HepG2 (cell line): ENCODE measurements at regions of chr12 and their contacts with region 1.

Region 1: GRCh38 chr12:110111476-110112334 is 12.5 kb upstream of the IFT81 start:
- DNase-seq: peak; percentile 99
- ATAC-seq: peak; percentile 90
- H3K4me3 ChIP-seq: peak overlapping the region in 1 of 3 experiments; percentile 25; a peak in 1 of 6 replicates
- H3K27ac ChIP-seq: peak overlapping the region; percentile 99
- H3K4me1 ChIP-seq: peaks cover 98% of the 10 kb centered on the region
- H3K27me3 ChIP-seq: no peaks in the 10 kb centered on the region
- CTCF ChIP-seq: no peak
- EP300 ChIP-seq: peak; percentile 72 to 88; a peak in 2 of 4 replicates
- POLR2A ChIP-seq: peak in 1 of 2 experiments; percentile 38; a peak in 1 of 4 replicates
- RAD21 ChIP-seq: no peak; the same call in 1 of the 2 replicates

Region 2: DNA sequence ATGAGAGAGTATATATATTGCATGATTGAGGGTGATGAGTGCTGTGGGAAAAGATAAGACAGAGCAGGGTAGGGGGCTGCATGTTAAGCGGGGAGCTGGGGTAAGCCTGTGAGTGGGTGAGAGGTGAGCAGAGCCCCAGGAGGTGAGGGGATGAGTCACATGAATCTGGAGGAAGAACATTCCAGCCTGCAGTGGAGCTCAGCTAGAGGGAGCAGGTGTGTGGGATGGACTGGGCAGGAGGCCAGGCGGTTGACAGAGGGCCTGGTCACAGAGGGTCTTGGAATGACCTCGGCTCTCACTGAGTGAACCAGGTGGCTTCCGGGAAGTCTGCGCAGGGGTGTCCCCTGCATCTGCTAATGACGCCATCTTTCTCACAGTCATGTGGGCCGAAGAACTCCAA is 160.0 kb before region 1 on chr12:
- CTCF ChIA-PET with region 1: no interaction called
- POLR2A ChIA-PET with region 1: no interaction called
- in situ Hi-C with region 1: no loop called
- intact Hi-C with region 1: no loop called
- DNase-seq: no peak
- ATAC-seq: no peak
- H3K4me3 ChIP-seq: no peak overlapping the region
- H3K27ac ChIP-seq: no peak overlapping the region
- H3K4me1 ChIP-seq: peaks cover 49% of the 10 kb centered on the region
- H3K27me3 ChIP-seq: no peaks in the 10 kb centered on the region
- CTCF ChIP-seq: no peak
- EP300 ChIP-seq: no peak
- POLR2A ChIP-seq: no peak
- RAD21 ChIP-seq: no peak

Region 3: DNA sequence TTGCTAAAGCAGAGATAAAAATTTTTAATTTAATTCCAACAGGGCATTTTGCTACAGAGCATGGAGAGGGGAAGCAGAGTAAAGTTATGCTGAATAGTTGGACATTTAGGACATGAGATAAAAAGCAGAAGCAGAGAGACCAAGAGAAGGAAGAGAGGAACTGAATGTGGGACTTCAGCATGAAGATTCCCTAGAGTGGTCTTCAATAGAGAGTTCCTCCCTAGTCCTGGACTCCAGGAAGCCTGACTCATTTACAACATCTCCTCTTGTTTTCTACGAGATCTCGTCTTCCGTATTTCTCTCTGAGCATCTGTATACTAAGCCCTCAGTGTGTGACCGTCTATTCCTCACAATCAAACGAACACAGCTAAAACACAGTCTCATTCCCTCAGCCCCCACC is 22.8 kb before region 1 on chr12:
- CTCF ChIA-PET with region 1: no interaction called
- POLR2A ChIA-PET with region 1: interaction called, 10 read pairs
- in situ Hi-C with region 1: no loop called
- intact Hi-C with region 1: no loop called
- DNase-seq: no peak
- ATAC-seq: no peak
- H3K4me3 ChIP-seq: no peak overlapping the region
- H3K27ac ChIP-seq: no peak overlapping the region
- H3K4me1 ChIP-seq: peaks cover 75% of the 10 kb centered on the region
- H3K27me3 ChIP-seq: no peaks in the 10 kb centered on the region
- CTCF ChIP-seq: no peak
- EP300 ChIP-seq: no peak
- POLR2A ChIP-seq: no peak
- RAD21 ChIP-seq: no peak

Region 4: GRCh38 chr12:110124184-110124995 is 12.7 kb after region 1 on chr12 and contains the start of gene IFT81:
- CTCF ChIA-PET with region 1: no interaction called
- POLR2A ChIA-PET with region 1: interaction called, 26 read pairs
- in situ Hi-C with region 1: no loop called
- intact Hi-C with region 1: no loop called
- DNase-seq: peak; percentile 83
- ATAC-seq: peak; percentile 89
- H3K4me3 ChIP-seq: peak within 1 kb of the TSS; percentile 72 to 99 (median 96)
- H3K27ac ChIP-seq: peak within 1 kb of the TSS; percentile 75
- H3K4me1 ChIP-seq: peaks cover 46% of the 10 kb centered on the region
- H3K27me3 ChIP-seq: no peaks in the 10 kb centered on the region; a peak in 1 of 5 replicates
- CTCF ChIP-seq: peak; percentile 59
- EP300 ChIP-seq: peak in 1 of 2 experiments; percentile 35; a peak in 1 of 4 replicates
- POLR2A ChIP-seq: peak in 1 of 2 experiments; percentile 52; a peak in 3 of 4 replicates
- RAD21 ChIP-seq: peak; percentile 48; the same call in 1 of the 2 replicates
- total RNA-seq, gene IFT81: 13.0 and 13.3 TPM in 2 replicates